ENCODE measurements at regions of chrX and their contacts with region 1.

Region 1: DNA sequence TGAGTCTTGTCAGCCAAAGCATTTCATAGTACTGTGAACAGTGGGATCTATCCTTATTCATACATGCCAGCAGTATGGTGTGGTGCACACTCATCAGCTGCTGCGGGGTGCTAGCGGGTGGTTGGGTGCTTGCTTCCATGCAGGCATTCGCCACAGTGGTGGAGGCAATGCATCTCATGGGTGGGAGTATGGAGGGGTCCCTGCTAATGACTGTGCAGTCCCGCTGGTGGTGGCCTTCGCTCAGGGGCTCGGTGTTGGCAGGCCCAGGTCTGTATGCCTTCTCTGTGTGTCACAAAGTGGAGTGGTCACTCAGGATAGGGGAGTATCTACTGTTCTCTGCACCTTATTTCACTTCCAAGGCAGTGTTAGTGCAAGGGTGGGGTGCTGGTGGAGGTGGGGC is 122.6 kb downstream of the POU3F4 start:
- DNase-seq: no peak
- ATAC-seq: no peak
- H3K4me3 ChIP-seq: no peak overlapping the region
- H3K27ac ChIP-seq: no peak overlapping the region
- H3K4me1 ChIP-seq: no peaks in the 10 kb centered on the region
- H3K27me3 ChIP-seq: no peaks in the 10 kb centered on the region
- CTCF ChIP-seq: no peak
- EP300 ChIP-seq: no peak
- POLR2A ChIP-seq: no peak
- RAD21 ChIP-seq: no peak

Region 2: DNA sequence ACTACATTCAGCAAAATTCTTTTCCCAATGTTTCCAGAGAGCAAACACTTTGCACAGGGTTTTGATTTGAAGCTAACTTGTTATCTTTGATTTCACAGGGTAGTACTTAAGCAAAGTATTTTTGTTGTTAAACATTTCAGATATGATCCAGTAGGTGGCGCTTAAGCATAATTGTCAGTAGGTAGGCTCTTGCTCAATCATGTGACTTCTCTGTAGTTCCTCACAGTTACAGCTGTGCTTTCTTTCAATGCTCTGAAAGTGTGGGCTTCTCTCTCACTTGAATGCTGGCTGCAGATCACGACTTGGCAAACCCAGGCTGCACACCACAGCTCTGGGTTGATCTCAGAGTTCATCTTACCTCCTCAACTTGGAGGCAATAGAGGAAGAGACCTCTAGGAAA is 1412.3 kb before region 1 on chrX:
- CTCF ChIA-PET with region 1: no interaction called
- POLR2A ChIA-PET with region 1: no interaction called
- in situ Hi-C with region 1: no loop called
- intact Hi-C with region 1: loop called (anchors 10 kb)
- DNase-seq: peak; percentile 0
- ATAC-seq: peak; percentile 42
- H3K4me3 ChIP-seq: no peak overlapping the region
- H3K27ac ChIP-seq: no peak overlapping the region
- H3K4me1 ChIP-seq: no peaks in the 10 kb centered on the region
- H3K27me3 ChIP-seq: no peaks in the 10 kb centered on the region
- CTCF ChIP-seq: peak; percentile 20; the same call in 1 of the 2 replicates
- EP300 ChIP-seq: no peak
- POLR2A ChIP-seq: no peak
- RAD21 ChIP-seq: no peak

Region 3: GRCh38 chrX:83469551-83469950 is 161.1 kb before region 1 on chrX:
- CTCF ChIA-PET with region 1: interaction called, 10 read pairs
- POLR2A ChIA-PET with region 1: no interaction called
- in situ Hi-C with region 1: no loop called
- intact Hi-C with region 1: loop called (anchors 1 kb)
- DNase-seq: peak; percentile 6
- ATAC-seq: peak; percentile 68
- H3K4me3 ChIP-seq: no peak overlapping the region
- H3K27ac ChIP-seq: no peak overlapping the region
- H3K4me1 ChIP-seq: no peaks in the 10 kb centered on the region
- H3K27me3 ChIP-seq: no peaks in the 10 kb centered on the region
- CTCF ChIP-seq: peak; percentile 58
- EP300 ChIP-seq: no peak
- POLR2A ChIP-seq: no peak
- RAD21 ChIP-seq: no peak

Region 4: GRCh38 chrX:83501530-83501929 is 129.1 kb before region 1 on chrX:
- CTCF ChIA-PET with region 1: no interaction called
- POLR2A ChIA-PET with region 1: no interaction called
- in situ Hi-C with region 1: no loop called
- intact Hi-C with region 1: no loop called
- DNase-seq: no peak
- ATAC-seq: no peak
- H3K4me3 ChIP-seq: no peak overlapping the region
- H3K27ac ChIP-seq: no peak overlapping the region
- H3K4me1 ChIP-seq: no peaks in the 10 kb centered on the region
- H3K27me3 ChIP-seq: peaks cover 0 to 3% of the 10 kb centered on the region in 2 experiments; a peak in 1 of 5 replicates
- CTCF ChIP-seq: no peak
- EP300 ChIP-seq: no peak
- POLR2A ChIP-seq: no peak
- RAD21 ChIP-seq: no peak

Region 5: GRCh38 chrX:83819313-83819712 is 188.7 kb after region 1 on chrX:
- CTCF ChIA-PET with region 1: no interaction called
- POLR2A ChIA-PET with region 1: no interaction called
- in situ Hi-C with region 1: no loop called
- intact Hi-C with region 1: no loop called
- DNase-seq: no peak
- ATAC-seq: no peak
- H3K4me3 ChIP-seq: no peak overlapping the region
- H3K27ac ChIP-seq: no peak overlapping the region
- H3K4me1 ChIP-seq: no peaks in the 10 kb centered on the region
- H3K27me3 ChIP-seq: no peaks in the 10 kb centered on the region
- CTCF ChIP-seq: no peak
- EP300 ChIP-seq: no peak
- POLR2A ChIP-seq: no peak
- RAD21 ChIP-seq: no peak

Measured in HepG2 (cell line).